ENCODE measurements at regions of chr1 and their contacts with region 1.

Region 1: DNA sequence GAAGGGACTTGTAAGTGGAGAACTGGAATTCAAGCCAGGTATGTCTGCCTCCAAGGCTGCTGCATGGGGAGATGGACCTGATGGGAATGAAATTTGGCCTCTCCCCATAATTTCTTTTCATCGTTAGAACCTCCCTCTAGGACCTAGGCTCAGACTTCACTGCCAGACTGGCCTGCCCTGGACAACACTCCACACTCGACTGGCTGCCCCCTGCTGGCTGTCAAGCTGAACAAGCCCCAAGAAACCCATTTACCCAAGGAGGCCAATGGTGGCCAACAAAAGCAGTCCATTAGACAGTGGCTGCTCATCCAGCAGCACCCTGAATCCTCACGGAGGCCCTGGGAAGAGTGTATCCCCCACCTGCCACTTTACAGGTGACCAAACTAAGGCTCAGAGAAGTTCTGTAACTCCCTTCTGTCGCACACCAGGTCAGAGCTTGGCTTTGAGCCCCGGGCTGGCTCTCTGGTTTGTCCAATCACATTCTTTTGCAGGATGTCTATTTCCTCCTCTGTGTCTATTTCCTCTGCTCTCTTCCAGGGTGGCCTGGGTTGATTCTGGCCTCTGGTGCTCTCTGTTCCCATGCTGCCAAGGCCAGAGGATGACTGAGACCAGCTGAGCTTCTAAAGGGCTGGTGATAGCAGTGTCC is 3.8 kb downstream of the RNF186 start:
- DNase-seq: peak; percentile 17
- H3K4me3 Mint-ChIP-seq: no peak overlapping the region
- H3K27ac Mint-ChIP-seq: no peak overlapping the region
- H3K4me1 Mint-ChIP-seq: no peaks in the 10 kb centered on the region
- H3K27me3 Mint-ChIP-seq: peaks cover 3% of the 10 kb centered on the region

Region 2: GRCh38 chr1:19661721-19662228 is 149.6 kb before region 1 on chr1:
- intact Hi-C with region 1: loop called (anchors 10 kb)
- DNase-seq: no peak
- H3K4me3 Mint-ChIP-seq: no peak overlapping the region
- H3K27ac Mint-ChIP-seq: no peak overlapping the region
- H3K4me1 Mint-ChIP-seq: peaks cover 8% of the 10 kb centered on the region
- H3K27me3 Mint-ChIP-seq: peaks cover 28% of the 10 kb centered on the region

Region 3: DNA sequence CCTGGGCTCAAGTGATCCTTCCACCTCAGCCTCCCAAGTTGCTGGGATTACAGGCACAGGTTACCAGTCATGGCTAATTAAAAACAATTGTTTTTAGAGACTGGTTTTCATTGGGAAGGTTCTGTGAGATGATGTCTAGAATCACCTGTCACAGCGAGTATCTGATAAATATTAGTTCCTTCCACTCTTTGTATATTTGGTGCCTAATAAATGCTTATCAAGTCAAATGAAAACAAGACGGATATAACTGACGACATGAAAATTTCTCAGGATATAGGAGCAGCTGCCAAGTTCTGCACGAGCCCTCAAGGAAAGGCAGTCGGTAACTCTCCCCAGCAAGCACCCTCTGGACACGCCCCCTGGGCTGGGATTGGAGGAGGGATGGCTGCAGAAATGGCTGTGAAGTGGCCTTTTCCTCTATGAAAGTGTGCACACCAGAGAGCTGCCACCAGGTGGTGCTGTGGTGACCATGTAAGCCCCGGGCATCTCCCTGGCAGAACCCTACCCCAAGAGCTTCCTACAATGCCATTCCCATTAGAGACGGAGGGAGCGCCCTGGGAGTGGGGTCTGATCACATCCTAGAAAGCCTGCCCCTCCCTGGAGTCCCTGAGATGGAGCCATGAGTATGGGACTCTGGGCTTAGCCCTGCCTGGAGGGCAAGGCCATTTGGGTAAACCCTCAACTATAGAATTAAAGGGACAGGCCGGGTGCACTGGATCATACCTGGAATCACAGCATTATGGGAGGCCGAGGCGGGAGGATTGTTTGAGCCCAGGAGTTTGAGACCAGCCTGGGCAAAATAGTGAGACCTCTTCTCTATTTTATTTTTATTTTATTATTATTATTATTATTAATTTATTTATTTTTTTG is 95.8 kb before region 1 on chr1:
- intact Hi-C with region 1: loop called (anchors 5 kb)
- DNase-seq: peak; percentile 80
- H3K4me3 Mint-ChIP-seq: no peak overlapping the region
- H3K27ac Mint-ChIP-seq: no peak overlapping the region
- H3K4me1 Mint-ChIP-seq: peaks cover 17% of the 10 kb centered on the region
- H3K27me3 Mint-ChIP-seq: no peaks in the 10 kb centered on the region

Region 4: GRCh38 chr1:19762175-19762779 is 49.1 kb before region 1 on chr1:
- intact Hi-C with region 1: loop called (anchors 1 kb)
- DNase-seq: no peak
- H3K4me3 Mint-ChIP-seq: no peak overlapping the region
- H3K27ac Mint-ChIP-seq: no peak overlapping the region
- H3K4me1 Mint-ChIP-seq: peaks cover 17% of the 10 kb centered on the region
- H3K27me3 Mint-ChIP-seq: no peaks in the 10 kb centered on the region

Region 5: GRCh38 chr1:20233394-20233793 is 422.1 kb after region 1 on chr1:
- intact Hi-C with region 1: no loop called
- DNase-seq: no peak
- H3K4me3 Mint-ChIP-seq: no peak overlapping the region
- H3K27ac Mint-ChIP-seq: no peak overlapping the region
- H3K4me1 Mint-ChIP-seq: no peaks in the 10 kb centered on the region
- H3K27me3 Mint-ChIP-seq: peaks cover 49% of the 10 kb centered on the region